AG04449 (cell line): ENCODE measurements at regions of chr9 and their contacts with region 1.

Region 1: GRCh38 chr9:131739980-131740648 is at the start of gene RAPGEF1:
- DNase-seq: no peak
- H3K4me3 ChIP-seq: peak within 1 kb of the TSS; percentile 63
- CTCF ChIP-seq: peak; percentile 74

Region 2: GRCh38 chr9:131530920-131531832 is 208.9 kb before region 1 on chr9 and contains the start of gene UCK1:
- CTCF ChIA-PET with region 1: interaction called, 10 read pairs
- POLR2A ChIA-PET with region 1: interaction called, 3 read pairs
- DNase-seq: no peak
- H3K4me3 ChIP-seq: peak within 1 kb of the TSS; percentile 74
- CTCF ChIP-seq: no peak

Region 3: GRCh38 chr9:131590908-131591844 is 148.9 kb before region 1 on chr9:
- CTCF ChIA-PET with region 1: interaction called, 556 read pairs
- POLR2A ChIA-PET with region 1: no interaction called
- DNase-seq: peak; percentile 14
- H3K4me3 ChIP-seq: no peak overlapping the region
- CTCF ChIP-seq: peak; percentile 90

Region 4: GRCh38 chr9:131627648-131628458 is 112.3 kb before region 1 on chr9:
- CTCF ChIA-PET with region 1: interaction called, 19 read pairs
- POLR2A ChIA-PET with region 1: no interaction called
- DNase-seq: no peak
- H3K4me3 ChIP-seq: no peak overlapping the region
- CTCF ChIP-seq: no peak

Region 5: GRCh38 chr9:131645078-131645776 is 94.9 kb before region 1 on chr9:
- CTCF ChIA-PET with region 1: interaction called, 13 read pairs
- POLR2A ChIA-PET with region 1: no interaction called
- DNase-seq: no peak
- H3K4me3 ChIP-seq: no peak overlapping the region
- CTCF ChIP-seq: no peak